Tibial artery (tissue), 4 donors: ENCODE measurements at regions of chr12 and their contacts with region 1.

Region 1: GRCh38 chr12:11092128-11092527 is at the start of gene TAS2R43:
- DNase-seq: no peak
- H3K4me3 ChIP-seq: no peak within 1 kb of the TSS
- H3K27ac ChIP-seq: no peak within 1 kb of the TSS
- H3K4me1 ChIP-seq: no peaks in the 10 kb centered on the region
- H3K27me3 ChIP-seq: no peaks in the 10 kb centered on the region
- CTCF ChIP-seq: no peak

Region 2: GRCh38 chr12:11039171-11039570 is 53.0 kb before region 1 on chr12:
- intact Hi-C with region 1: loop called (anchors 5 kb)
- DNase-seq: no peak
- H3K4me3 ChIP-seq: no peak overlapping the region
- H3K27ac ChIP-seq: no peak overlapping the region
- H3K4me1 ChIP-seq: no peaks in the 10 kb centered on the region
- H3K27me3 ChIP-seq: no peaks in the 10 kb centered on the region
- CTCF ChIP-seq: no peak